AG04450 (cell line): ENCODE measurements at regions of chr2 and their contacts with region 1.

Region 1: GRCh38 chr2:128362846-128363228 is 44.2 kb upstream of the HS6ST1 start:
- DNase-seq: peak; percentile 51
- H3K4me3 ChIP-seq: no peak overlapping the region
- H3K27ac ChIP-seq: peak overlapping the region; percentile 81
- H3K27me3 ChIP-seq: no peaks in the 10 kb centered on the region
- CTCF ChIP-seq: no peak

Region 2: GRCh38 chr2:127664065-127664894 is 698.6 kb before region 1 on chr2:
- CTCF ChIA-PET with region 1: no interaction called
- POLR2A ChIA-PET with region 1: no interaction called
- DNase-seq: no peak
- H3K4me3 ChIP-seq: peak overlapping the region; percentile 29
- H3K27ac ChIP-seq: no peak overlapping the region
- H3K27me3 ChIP-seq: peaks cover 7% of the 10 kb centered on the region
- CTCF ChIP-seq: no peak

Region 3: GRCh38 chr2:128321784-128322714 is 40.8 kb before region 1 on chr2:
- CTCF ChIA-PET with region 1: no interaction called
- POLR2A ChIA-PET with region 1: no interaction called
- DNase-seq: no peak
- H3K4me3 ChIP-seq: peak overlapping the region; percentile 61
- H3K27ac ChIP-seq: peak overlapping the region; percentile 21
- H3K27me3 ChIP-seq: no peaks in the 10 kb centered on the region
- CTCF ChIP-seq: peak; percentile 59

Region 4: GRCh38 chr2:128374001-128374710 is 11.3 kb after region 1 on chr2:
- CTCF ChIA-PET with region 1: interaction called, 7 read pairs
- POLR2A ChIA-PET with region 1: interaction called, 14 read pairs
- DNase-seq: peak; percentile 72
- H3K4me3 ChIP-seq: no peak overlapping the region
- H3K27ac ChIP-seq: peak overlapping the region; percentile 11
- H3K27me3 ChIP-seq: no peaks in the 10 kb centered on the region
- CTCF ChIP-seq: no peak

Region 5: GRCh38 chr2:128520791-128521190 is 158.0 kb after region 1 on chr2:
- CTCF ChIA-PET with region 1: no interaction called
- POLR2A ChIA-PET with region 1: no interaction called
- DNase-seq: no peak
- H3K4me3 ChIP-seq: no peak overlapping the region
- H3K27ac ChIP-seq: no peak overlapping the region
- H3K27me3 ChIP-seq: no peaks in the 10 kb centered on the region
- CTCF ChIP-seq: no peak